PC-9 (cell line): ENCODE measurements at regions of chr7 and their contacts with region 1.

Region 1: GRCh38 chr7:26627891-26628341 is 236.5 kb downstream of the SKAP2 start:
- DNase-seq: no peak
- H3K4me3 ChIP-seq: no peak overlapping the region
- H3K27ac ChIP-seq: no peak overlapping the region
- H3K4me1 ChIP-seq: no peaks in the 10 kb centered on the region
- H3K27me3 ChIP-seq: no peaks in the 10 kb centered on the region
- CTCF ChIP-seq: no peak

Region 2: GRCh38 chr7:26131056-26131589 is 496.8 kb before region 1 on chr7:
- CTCF ChIA-PET with region 1: interaction called, 15 read pairs
- POLR2A ChIA-PET with region 1: interaction called, 3 read pairs
- intact Hi-C with region 1: no loop called
- DNase-seq: peak in 1 of 2 experiments; percentile 26
- H3K4me3 ChIP-seq: no peak overlapping the region
- H3K27ac ChIP-seq: no peak overlapping the region
- H3K4me1 ChIP-seq: 0 out of 2 replicates have a peak, but pooled peaks cover 7% of the 10 kb centered on the region
- H3K27me3 ChIP-seq: no peaks in the 10 kb centered on the region
- CTCF ChIP-seq: no peak

Region 3: GRCh38 chr7:26735976-26736600 is 108.2 kb after region 1 on chr7:
- CTCF ChIA-PET with region 1: no interaction called
- POLR2A ChIA-PET with region 1: no interaction called
- intact Hi-C with region 1: no loop called
- DNase-seq: no peak
- H3K4me3 ChIP-seq: no peak overlapping the region
- H3K27ac ChIP-seq: no peak overlapping the region
- H3K4me1 ChIP-seq: no peaks in the 10 kb centered on the region
- H3K27me3 ChIP-seq: no peaks in the 10 kb centered on the region
- CTCF ChIP-seq: no peak